ENCODE measurements at regions of chr16 and their contacts with region 1.

Region 1: DNA sequence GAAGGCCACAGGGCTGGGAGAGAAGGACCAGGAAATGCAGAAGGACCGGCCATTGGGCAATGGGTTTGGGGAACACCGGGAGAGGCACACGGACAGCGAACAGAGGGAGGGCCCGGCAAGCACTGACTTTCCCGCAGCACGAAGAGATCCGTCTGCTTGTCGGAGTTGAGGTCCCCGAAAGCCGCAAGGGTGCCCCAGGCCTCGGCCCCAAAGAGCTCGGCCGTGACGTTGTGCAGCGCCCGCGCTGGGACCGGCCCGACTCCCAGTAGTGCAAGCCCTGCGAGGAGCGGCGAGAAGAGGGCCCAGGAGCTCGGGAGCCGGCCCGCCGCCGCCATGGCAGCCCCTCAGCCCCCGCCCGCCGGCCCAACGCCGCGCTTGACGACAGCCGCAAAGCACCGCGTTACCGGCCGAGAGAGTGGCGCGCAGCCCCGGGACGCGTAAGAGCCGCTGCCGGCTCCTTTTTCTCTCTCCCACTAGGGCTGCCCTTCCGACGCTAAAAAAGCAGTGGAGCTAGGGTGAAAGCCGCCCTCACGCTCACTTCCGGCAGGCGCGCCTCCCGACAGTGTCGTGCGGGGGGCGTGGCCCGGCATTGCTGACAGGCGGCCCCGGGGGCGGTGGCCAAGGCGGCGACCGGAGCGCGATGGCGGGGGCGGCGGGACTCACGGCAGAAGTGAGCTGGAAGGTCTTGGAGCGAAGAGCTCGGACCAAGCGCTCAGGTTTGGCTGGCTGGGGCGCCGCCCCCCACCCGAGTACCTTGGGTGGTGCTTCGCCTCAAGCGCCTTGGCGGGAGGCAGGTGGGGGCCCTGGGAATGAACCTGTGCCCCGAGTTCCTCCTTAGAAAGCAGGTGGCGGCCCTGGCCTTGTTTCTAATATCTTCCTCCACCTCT is at the starts of genes ITFG1 and PHKB:
- DNase-seq: peak; percentile 97
- ATAC-seq: peak; percentile 95
- H3K4me3 Mint-ChIP-seq: peak within 1 kb of the TSS; percentile 97
- H3K27ac Mint-ChIP-seq: peak within 1 kb of the TSS; percentile 97
- H3K4me1 Mint-ChIP-seq: peaks cover 58% of the 10 kb centered on the region
- H3K27me3 Mint-ChIP-seq: no peaks in the 10 kb centered on the region
- total RNA-seq, gene ITFG1: 18.9 to 27.0 TPM
- total RNA-seq, gene PHKB: 12.6 to 12.8 TPM

Region 2: DNA sequence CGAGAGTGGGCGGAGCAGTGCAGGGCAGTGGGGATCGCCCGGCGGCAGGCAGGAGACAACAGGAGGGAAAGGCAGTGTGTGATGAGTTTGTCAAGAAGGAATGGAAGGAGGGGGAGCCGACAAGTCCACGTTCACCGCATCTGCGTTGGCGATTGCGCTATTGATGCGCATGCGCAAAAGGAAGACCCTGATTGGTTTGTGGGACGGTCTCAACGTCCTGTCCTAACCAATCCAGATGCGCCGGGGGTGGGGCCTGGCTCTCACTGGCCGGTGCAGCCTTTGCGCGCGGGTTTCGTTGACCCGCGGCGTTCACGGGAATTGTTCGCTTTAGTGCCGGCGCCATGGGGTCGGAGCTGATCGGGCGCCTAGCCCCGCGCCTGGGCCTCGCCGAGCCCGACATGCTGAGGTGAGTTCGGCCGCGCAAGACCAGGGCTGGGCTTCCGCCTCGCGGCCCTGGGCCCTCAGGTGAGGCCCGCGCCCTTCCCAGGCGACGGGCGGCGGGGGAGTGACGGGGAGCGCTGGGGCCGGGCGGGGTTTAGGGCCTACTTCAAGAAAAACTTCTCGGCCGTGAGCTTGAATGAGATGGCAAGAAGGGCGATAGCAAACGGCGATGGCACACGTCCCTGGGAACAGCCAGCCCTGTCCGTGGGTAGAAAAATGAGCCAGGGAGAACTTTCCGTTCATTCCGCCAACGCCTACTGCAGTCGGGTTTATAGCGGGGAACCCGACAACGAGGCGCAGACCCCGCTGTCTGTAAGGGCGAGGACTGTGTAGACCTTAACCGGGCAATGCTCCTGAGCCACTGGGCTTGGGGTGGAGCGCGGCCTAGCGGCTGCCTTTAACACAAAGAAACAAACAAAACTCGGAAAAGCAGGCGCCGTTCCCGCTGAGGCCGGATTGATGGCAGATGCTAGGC is 771.3 kb before region 1 on chr16 and contains the start of gene ORC6:
- CTCF ChIA-PET with region 1: no interaction called
- POLR2A ChIA-PET with region 1: no interaction called
- intact Hi-C with region 1: loop called in 1 of 2 experiments (anchors 1 kb)
- DNase-seq: peak; percentile 99
- ATAC-seq: peak; percentile 83
- H3K4me3 Mint-ChIP-seq: no peak within 1 kb of the TSS
- H3K27ac Mint-ChIP-seq: no peak within 1 kb of the TSS
- H3K4me1 Mint-ChIP-seq: peaks cover 43% of the 10 kb centered on the region
- H3K27me3 Mint-ChIP-seq: no peaks in the 10 kb centered on the region
- total RNA-seq, gene ORC6: 30.3 to 43.4 TPM

Region 3: DNA sequence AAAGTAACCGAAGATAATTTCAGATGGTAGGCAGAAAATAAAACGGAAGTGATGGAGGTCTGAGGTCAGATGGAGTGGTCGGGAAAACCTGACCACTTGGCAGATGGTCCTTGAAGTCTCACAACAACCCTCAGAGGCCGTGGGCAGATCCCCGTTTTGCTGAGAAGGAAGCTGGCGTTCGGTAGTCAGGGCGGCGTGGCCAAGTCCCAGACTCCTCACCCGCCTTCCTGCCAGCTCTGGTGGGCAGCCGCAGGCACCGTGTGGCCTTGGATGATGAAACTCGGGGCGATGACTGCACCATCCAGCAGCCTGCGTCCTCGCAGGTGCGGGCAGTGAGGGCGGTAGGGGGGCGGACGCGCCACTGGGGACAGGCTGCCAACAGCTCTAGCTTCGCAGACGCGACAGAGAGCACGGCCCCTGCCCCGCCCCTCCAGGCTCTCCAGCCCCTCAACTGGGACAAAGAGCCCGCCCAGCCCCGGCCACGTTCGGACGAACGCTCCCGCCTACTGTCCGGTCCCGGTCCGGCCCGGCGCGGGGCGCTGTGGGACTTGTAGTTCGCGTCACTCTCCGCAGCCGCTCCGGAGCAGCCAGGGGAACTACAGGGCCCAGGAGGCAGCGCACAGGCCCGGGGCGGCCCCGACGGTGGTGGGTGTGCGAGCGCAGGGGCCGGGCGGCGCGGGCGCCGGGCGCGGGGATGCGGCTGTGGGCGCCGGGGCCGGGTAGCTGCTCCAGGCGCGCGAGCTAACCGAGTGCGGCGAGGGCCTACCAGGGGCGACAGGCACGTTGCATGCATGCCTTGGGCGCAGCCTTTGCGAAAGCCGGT is 577.1 kb before region 1 on chr16 and contains the start of gene GPT2:
- CTCF ChIA-PET with region 1: no interaction called
- POLR2A ChIA-PET with region 1: no interaction called
- intact Hi-C with region 1: loop called in 1 of 2 experiments (anchors 2 kb)
- DNase-seq: peak; percentile 91
- ATAC-seq: peak; percentile 96
- H3K4me3 Mint-ChIP-seq: peak within 1 kb of the TSS; percentile 80
- H3K27ac Mint-ChIP-seq: peak within 1 kb of the TSS; percentile 94
- H3K4me1 Mint-ChIP-seq: peaks cover 10% of the 10 kb centered on the region
- H3K27me3 Mint-ChIP-seq: peaks cover 24% of the 10 kb centered on the region
- total RNA-seq, gene GPT2: 25.6 to 34.9 TPM

Region 4: DNA sequence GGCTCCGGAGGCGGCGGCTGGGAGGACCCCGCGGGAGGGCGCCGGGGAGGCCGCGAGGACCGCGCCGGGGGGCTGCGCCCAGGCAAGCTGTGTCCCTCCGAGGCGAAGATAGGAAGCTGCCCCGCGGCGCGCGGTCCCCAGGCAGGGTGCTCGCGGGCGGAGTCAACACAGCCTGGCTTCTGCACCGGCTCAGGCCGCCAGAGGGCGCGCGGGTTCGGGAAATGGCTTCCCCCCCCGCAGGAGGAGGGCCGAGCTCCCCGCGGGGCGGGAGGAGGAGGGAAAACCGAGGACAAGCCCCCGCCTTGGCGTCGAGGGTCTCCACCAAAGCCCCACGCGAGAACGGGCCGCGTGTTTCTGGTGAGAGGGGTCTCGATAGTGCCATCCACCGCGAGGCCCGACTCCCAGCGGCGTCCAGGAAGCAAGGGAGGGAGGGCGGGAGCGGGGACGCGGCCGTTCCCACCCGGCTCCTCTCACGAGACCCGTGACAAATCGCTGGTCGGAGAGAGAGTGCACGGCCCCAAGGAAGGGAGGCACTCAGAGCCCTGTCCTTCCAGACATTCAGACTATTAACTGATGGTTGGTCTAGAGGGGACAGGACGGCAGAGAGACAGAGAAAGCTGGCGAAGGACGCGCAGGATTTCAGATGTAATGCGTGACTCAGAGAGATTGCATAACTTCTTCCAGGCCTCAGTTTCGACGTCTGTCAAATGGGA is 423.1 kb before region 1 on chr16:
- CTCF ChIA-PET with region 1: interaction called, 6 read pairs
- POLR2A ChIA-PET with region 1: interaction called, 3 read pairs
- intact Hi-C with region 1: loop called in 1 of 2 experiments (anchors 5 kb)
- DNase-seq: peak; percentile 94
- ATAC-seq: peak; percentile 98
- H3K4me3 Mint-ChIP-seq: peak overlapping the region; percentile 65
- H3K27ac Mint-ChIP-seq: no peak overlapping the region
- H3K4me1 Mint-ChIP-seq: peaks cover 2% of the 10 kb centered on the region
- H3K27me3 Mint-ChIP-seq: peaks cover 8% of the 10 kb centered on the region

Region 5: GRCh38 chr16:48164907-48165726 is 704.2 kb after region 1 on chr16:
- CTCF ChIA-PET with region 1: no interaction called
- POLR2A ChIA-PET with region 1: interaction called, 3 read pairs
- intact Hi-C with region 1: loop called in 1 of 2 experiments (anchors 10 kb)
- DNase-seq: peak; percentile 82
- ATAC-seq: peak; percentile 92
- H3K4me3 Mint-ChIP-seq: no peak overlapping the region
- H3K27ac Mint-ChIP-seq: no peak overlapping the region
- H3K4me1 Mint-ChIP-seq: peaks cover 4% of the 10 kb centered on the region
- H3K27me3 Mint-ChIP-seq: peaks cover 17% of the 10 kb centered on the region

Region 6: DNA sequence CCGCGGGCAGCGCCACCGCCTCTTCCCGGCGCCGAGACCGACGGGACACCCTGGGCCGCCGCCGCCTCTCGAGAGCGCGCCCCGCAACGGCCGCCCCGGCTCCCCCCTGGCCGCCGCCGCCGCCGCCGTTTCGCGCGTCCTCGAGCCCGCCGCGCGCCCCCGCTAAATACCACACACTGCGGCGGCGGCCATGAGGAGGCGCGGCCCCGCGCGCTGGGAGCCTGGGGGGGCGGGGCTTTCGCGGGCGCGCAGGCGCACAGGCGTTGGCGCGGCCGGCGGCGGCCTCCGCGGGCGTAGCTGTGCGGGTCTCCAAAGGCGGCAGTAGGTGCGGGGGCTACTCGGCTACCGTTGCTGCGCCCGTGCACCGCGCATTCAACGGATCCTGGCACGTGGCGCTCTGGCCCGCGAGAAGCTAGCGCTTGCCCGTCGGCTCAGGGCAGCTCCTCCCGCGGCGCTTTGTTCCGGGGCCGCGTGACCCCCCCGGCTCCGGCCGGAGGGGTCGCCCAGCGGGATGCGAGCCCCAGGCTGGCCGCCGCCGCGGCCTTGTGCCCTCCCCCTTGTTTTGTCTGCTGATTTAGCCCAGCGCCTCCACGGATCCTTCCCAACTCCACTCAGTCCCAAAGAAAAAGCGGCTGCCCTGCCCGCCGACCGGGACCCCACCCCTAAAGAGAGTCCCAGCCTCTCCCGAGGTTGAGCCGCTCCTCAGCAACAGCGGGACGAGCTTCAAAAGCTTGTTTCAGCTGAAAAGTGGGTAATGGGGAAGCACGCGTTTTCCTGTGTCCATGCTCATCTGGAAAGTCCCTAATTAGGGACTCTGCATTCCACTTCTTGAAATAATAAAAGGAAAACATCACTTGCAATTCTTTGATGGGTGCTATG is 924.6 kb after region 1 on chr16 and contains the start of gene SIAH1:
- CTCF ChIA-PET with region 1: no interaction called
- POLR2A ChIA-PET with region 1: no interaction called
- intact Hi-C with region 1: loop called in 1 of 2 experiments (anchors 1 kb)
- DNase-seq: peak; percentile 91
- ATAC-seq: peak; percentile 82
- H3K4me3 Mint-ChIP-seq: peak within 1 kb of the TSS; percentile 85
- H3K27ac Mint-ChIP-seq: peak within 1 kb of the TSS; percentile 90
- H3K4me1 Mint-ChIP-seq: peaks cover 21% of the 10 kb centered on the region
- H3K27me3 Mint-ChIP-seq: no peaks in the 10 kb centered on the region
- total RNA-seq, gene SIAH1: 13.1 to 13.3 TPM

Measured in activated CD4-positive, alpha-beta T cell treated with anti-CD3 and anti-CD28 coated beads for 36 hours (primary cell).